Natural killer cell (primary cell): ENCODE measurements at regions of chr1 and their contacts with region 1.

Region 1: GRCh38 chr1:19289244-19289643 is 674 bp upstream of the AKR7A3 start:
- DNase-seq: no peak
- ATAC-seq: no peak
- H3K4me3 ChIP-seq: no peak overlapping the region
- H3K4me3 Mint-ChIP-seq: peak overlapping the region; percentile 66
- H3K27ac ChIP-seq: no peak overlapping the region
- H3K27ac Mint-ChIP-seq: no peak overlapping the region
- H3K4me1 ChIP-seq: peaks cover 4% of the 10 kb centered on the region
- H3K4me1 Mint-ChIP-seq: peaks cover 12% of the 10 kb centered on the region in 2 donors
- H3K27me3 ChIP-seq: no peaks in the 10 kb centered on the region
- H3K27me3 Mint-ChIP-seq: peaks cover 12 to 18% of the 10 kb centered on the region in 2 donors
- CTCF ChIP-seq: no peak

Region 2: GRCh38 chr1:19272064-19272463 is 17.2 kb before region 1 on chr1:
- intact Hi-C with region 1: loop called (anchors 1 kb)
- DNase-seq: no peak
- ATAC-seq: no peak
- H3K4me3 ChIP-seq: no peak overlapping the region
- H3K4me3 Mint-ChIP-seq: no peak overlapping the region
- H3K27ac ChIP-seq: no peak overlapping the region
- H3K27ac Mint-ChIP-seq: no peak overlapping the region
- H3K4me1 ChIP-seq: no peaks in the 10 kb centered on the region
- H3K4me1 Mint-ChIP-seq: peaks cover 0 to 5% of the 10 kb centered on the region in 2 donors
- H3K27me3 ChIP-seq: peaks cover 4% of the 10 kb centered on the region
- H3K27me3 Mint-ChIP-seq: peaks cover 10 to 21% of the 10 kb centered on the region in 2 donors
- CTCF ChIP-seq: no peak